ENCODE measurements at regions of chr15 and their contacts with region 1.

Region 1: DNA sequence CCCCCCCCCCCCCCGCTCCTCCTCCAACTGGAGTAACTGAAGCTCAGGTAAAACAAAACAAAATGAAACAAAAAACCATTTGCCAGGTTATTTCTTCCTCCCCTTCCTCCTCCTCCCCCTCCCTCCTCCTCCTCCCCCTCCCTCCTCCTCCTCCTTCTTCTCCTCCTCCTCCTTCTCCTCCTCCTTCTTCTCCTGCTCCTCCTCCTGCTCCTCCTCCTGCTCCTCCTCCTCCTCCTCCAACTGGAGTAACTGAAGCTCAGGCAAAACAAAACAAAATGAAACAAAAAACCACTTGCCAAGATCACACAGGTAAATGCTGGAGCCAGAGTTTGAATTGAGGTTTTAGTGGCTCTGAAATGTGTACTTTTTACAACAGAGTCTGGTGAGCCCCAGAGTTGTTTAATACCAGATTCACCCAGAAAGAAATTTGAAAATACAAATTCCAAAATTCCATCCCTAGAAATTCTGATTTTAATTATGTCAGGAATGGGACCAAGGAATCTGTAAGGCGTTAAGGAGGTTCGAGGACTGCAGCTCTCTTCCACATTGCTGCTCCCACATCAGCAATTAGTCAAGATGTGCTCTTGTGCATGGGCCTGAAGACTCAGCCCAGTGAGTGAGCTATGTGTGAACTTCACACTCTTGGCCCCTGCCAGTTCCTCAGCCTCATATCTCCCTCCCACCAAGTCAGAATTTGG is 31.4 kb upstream of the ZNF770 start:
- DNase-seq: peak; percentile 39
- ATAC-seq: peak; percentile 89
- H3K4me3 ChIP-seq: no peak overlapping the region
- H3K27ac ChIP-seq: peak overlapping the region; percentile 47; the same call in 1 of the 2 replicates
- H3K4me1 ChIP-seq: peaks cover 11 to 14% of the 10 kb centered on the region in 2 experiments
- H3K27me3 ChIP-seq: no peaks in the 10 kb centered on the region
- CTCF ChIP-seq: no peak
- POLR2A ChIP-seq: no peak
- RAD21 ChIP-seq: no peak

Region 2: GRCh38 chr15:35000511-35000910 is 19.0 kb before region 1 on chr15:
- CTCF ChIA-PET with region 1: interaction called, 18 read pairs
- POLR2A ChIA-PET with region 1: interaction called, 8 read pairs
- RAD21 ChIA-PET with region 1: no interaction called
- intact Hi-C with region 1: no loop called
- DNase-seq: peak; percentile 76
- ATAC-seq: peak; percentile 93
- H3K4me3 ChIP-seq: peak overlapping the region in 1 of 2 experiments; percentile 35; a peak in 2 of 4 replicates
- H3K27ac ChIP-seq: peak overlapping the region; percentile 66
- H3K4me1 ChIP-seq: peaks cover 10 to 14% of the 10 kb centered on the region in 2 experiments
- H3K27me3 ChIP-seq: no peaks in the 10 kb centered on the region
- CTCF ChIP-seq: no peak
- POLR2A ChIP-seq: no peak
- RAD21 ChIP-seq: no peak

Measured in HCT116 (cell line).